T-cell (primary cell): ENCODE measurements at regions of chr1 and their contacts with region 1.

Region 1: GRCh38 chr1:42713293-42713692 is 26.7 kb downstream of the CLDN19 start:
- DNase-seq: no peak
- ATAC-seq: no peak
- H3K4me3 ChIP-seq: no peak overlapping the region
- H3K4me3 Mint-ChIP-seq: no peak overlapping the region
- H3K27ac ChIP-seq: no peak overlapping the region
- H3K27ac Mint-ChIP-seq: peak overlapping the region in 1 of 2 donors; percentile 37
- H3K4me1 ChIP-seq: no peaks in the 10 kb centered on the region
- H3K4me1 Mint-ChIP-seq: peaks cover 4 to 13% (median 7%) of the 10 kb centered on the region in 3 donors
- H3K27me3 ChIP-seq: no peaks in the 10 kb centered on the region
- H3K27me3 Mint-ChIP-seq: no peaks in the 10 kb centered on the region

Region 2: GRCh38 chr1:42639116-42639515 is 74.2 kb before region 1 on chr1:
- CTCF ChIA-PET with region 1: no interaction called
- POLR2A ChIA-PET with region 1: interaction called in 1 of 2 experiments, 12 read pairs
- DNase-seq: no peak
- ATAC-seq: no peak
- H3K4me3 ChIP-seq: no peak overlapping the region
- H3K4me3 Mint-ChIP-seq: no peak overlapping the region
- H3K27ac ChIP-seq: no peak overlapping the region
- H3K27ac Mint-ChIP-seq: no peak overlapping the region
- H3K4me1 ChIP-seq: no peaks in the 10 kb centered on the region
- H3K4me1 Mint-ChIP-seq: no peaks in the 10 kb centered on the region
- H3K27me3 ChIP-seq: no peaks in the 10 kb centered on the region
- H3K27me3 Mint-ChIP-seq: no peaks in the 10 kb centered on the region